Ovary (tissue), 10 donors: ENCODE measurements at regions of chr9 and their contacts with region 1.

Region 1: GRCh38 chr9:89000973-89001916 is 10.0 kb downstream of the S1PR3 start:
- DNase-seq: peak; percentile 82 to 89 (median 86)
- H3K4me3 ChIP-seq: no peak overlapping the region
- H3K27ac ChIP-seq: no peak overlapping the region
- H3K4me1 ChIP-seq: peaks cover 1% of the 10 kb centered on the region
- H3K27me3 ChIP-seq: no peaks in the 10 kb centered on the region
- CTCF ChIP-seq: peak; percentile 36 to 69 (median 68)
- EP300 ChIP-seq: no peak
- POLR2A ChIP-seq: no peak

Region 2: DNA sequence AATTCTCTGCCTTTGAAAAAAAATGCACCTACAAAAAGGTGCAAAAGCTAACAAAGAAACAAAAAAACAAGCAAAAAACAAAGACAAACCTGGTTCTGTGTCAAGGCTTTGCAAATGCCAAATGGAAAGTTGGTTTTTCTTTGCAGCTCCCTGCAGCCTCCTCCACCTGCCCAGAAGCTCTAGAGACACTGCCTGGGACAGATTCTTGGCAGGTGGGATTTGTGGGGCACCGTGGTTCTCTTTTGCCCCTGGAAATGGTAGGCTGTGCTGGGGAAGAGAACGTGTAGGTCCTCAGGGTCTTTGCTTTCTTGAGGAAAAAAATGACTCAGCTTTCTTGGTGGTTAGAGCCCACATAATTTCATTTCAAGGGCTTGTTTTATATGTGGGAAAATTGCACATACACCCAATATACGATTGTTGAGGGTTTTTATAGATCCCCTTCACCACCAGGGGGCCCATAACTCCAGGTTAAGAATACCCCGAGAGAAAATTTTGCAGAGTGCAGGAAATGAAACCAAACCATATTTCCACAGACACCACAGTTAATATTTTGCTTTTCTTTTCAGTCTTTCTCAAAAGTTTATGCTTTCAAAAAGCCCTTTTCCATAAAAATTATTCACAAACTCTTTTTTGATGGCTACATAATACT is 407.6 kb before region 1 on chr9:
- intact Hi-C with region 1: loop called (anchors 2 to 5 kb)
- DNase-seq: peak; percentile 36 to 66 (median 45)
- H3K4me3 ChIP-seq: no peak overlapping the region
- H3K27ac ChIP-seq: no peak overlapping the region
- H3K4me1 ChIP-seq: no peaks in the 10 kb centered on the region
- H3K27me3 ChIP-seq: no peaks in the 10 kb centered on the region
- CTCF ChIP-seq: peak; percentile 14 to 74 (median 60)
- EP300 ChIP-seq: no peak
- POLR2A ChIP-seq: no peak

Region 3: DNA sequence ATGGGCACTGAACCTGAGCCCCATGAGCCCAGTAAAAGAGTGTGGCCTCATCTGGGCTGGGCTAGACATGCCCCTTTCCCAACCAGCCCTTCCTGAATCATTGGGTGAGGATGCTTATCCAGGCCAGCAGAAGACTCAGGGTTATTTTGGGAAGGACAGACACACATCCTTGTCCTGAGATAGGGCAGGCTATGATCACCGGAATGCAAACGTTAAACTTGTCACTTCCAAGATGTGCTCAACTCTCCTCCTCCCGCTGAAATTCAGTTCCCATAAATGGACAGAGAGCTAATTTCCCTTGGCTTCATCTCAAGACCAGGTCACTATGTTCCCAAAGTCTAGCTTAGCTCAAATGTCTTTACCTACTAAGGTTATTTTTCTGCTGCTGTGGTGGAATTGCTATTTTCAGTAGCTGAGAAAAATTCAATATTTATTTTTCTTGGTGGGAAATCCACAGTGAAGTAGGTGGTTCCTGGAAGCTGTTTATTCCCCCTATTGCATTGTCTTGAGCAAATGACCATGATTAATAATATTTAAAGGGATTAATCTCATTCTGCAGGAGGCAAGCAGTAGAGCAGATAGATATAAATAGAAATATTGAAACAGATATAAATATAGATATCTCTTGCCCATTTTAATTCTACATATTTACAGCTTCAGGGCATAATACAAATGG is 396.3 kb before region 1 on chr9:
- intact Hi-C with region 1: loop called in 1 of 4 experiments (anchors 5 kb)
- DNase-seq: no peak
- H3K4me3 ChIP-seq: no peak overlapping the region
- H3K27ac ChIP-seq: peak overlapping the region in 1 of 2 donors; percentile 18
- H3K4me1 ChIP-seq: peaks cover 3% of the 10 kb centered on the region
- H3K27me3 ChIP-seq: no peaks in the 10 kb centered on the region
- CTCF ChIP-seq: no peak
- EP300 ChIP-seq: peak; percentile 91
- POLR2A ChIP-seq: no peak

Region 4: GRCh38 chr9:88733651-88734421 is 267.4 kb before region 1 on chr9:
- intact Hi-C with region 1: no loop called
- DNase-seq: no peak
- H3K4me3 ChIP-seq: no peak overlapping the region
- H3K27ac ChIP-seq: no peak overlapping the region
- H3K4me1 ChIP-seq: no peaks in the 10 kb centered on the region
- H3K27me3 ChIP-seq: no peaks in the 10 kb centered on the region
- CTCF ChIP-seq: no peak
- EP300 ChIP-seq: no peak
- POLR2A ChIP-seq: no peak